Activated CD4-positive, alpha-beta T cell treated with anti-CD3 and anti-CD28 coated beads, Interleukin-2, amount 10 ng/mL, durations not matched to agents 24 days and 14 days (primary cell): ENCODE measurements at regions of chr7 and their contacts with region 1.

Region 1: DNA sequence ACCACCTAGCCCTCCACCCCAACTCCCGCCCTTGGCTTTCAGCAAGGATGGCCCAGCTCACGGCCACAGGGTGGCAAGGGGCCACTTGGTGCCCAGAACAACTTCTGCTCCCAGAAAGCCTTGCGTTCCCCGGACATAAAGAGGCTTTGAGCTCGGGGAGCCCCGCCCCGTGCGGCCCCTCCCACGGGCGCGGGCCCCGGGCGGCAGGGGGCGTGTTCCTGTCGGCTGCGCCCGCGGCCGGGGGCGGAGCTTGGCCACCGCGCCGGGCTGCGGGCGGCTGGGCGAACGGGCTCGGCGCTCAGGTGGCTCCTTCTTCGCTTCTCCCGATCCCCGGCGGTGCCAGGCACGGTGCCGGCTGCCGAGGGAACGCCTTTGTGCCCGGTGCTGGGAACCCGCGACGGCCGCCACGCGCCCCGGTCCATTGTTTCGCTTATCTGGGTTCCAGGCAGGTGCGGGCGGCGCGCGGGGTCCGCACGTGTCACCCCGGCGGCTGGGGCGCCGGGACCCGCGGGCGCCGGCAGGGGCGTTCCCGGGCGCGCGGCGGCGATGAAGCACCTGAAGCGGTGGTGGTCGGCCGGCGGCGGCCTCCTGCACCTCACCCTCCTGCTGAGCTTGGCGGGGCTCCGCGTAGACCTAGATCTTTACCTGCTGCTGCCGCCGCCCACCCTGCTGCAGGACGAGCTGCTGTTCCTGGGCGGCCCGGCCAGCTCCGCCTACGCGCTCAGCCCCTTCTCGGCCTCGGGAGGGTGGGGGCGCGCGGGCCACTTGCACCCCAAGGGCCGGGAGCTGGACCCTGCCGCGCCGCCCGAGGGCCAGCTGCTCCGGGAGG is at the start of gene NFE2L3:
- DNase-seq: peak; percentile 96
- H3K4me3 Mint-ChIP-seq: peak within 1 kb of the TSS; percentile 93
- H3K27ac Mint-ChIP-seq: peak within 1 kb of the TSS; percentile 99
- H3K4me1 Mint-ChIP-seq: peaks cover 43% of the 10 kb centered on the region
- H3K27me3 Mint-ChIP-seq: peaks cover 1% of the 10 kb centered on the region
- total RNA-seq, gene NFE2L3: 67.8 and 68.7 TPM in 2 replicates

Region 2: GRCh38 chr7:25894902-25895791 is 257.0 kb before region 1 on chr7:
- intact Hi-C with region 1: loop called (anchors 10 kb)
- DNase-seq: peak; percentile 90
- H3K4me3 Mint-ChIP-seq: peak overlapping the region; percentile 75
- H3K27ac Mint-ChIP-seq: no peak overlapping the region
- H3K4me1 Mint-ChIP-seq: peaks cover 25% of the 10 kb centered on the region
- H3K27me3 Mint-ChIP-seq: peaks cover 17% of the 10 kb centered on the region

Region 3: GRCh38 chr7:26097852-26098668 is 54.1 kb before region 1 on chr7:
- intact Hi-C with region 1: loop called (anchors 1 kb)
- DNase-seq: no peak
- H3K4me3 Mint-ChIP-seq: peak overlapping the region; percentile 52
- H3K27ac Mint-ChIP-seq: peak overlapping the region; percentile 81
- H3K4me1 Mint-ChIP-seq: peaks cover 50% of the 10 kb centered on the region
- H3K27me3 Mint-ChIP-seq: no peaks in the 10 kb centered on the region

Region 4: DNA sequence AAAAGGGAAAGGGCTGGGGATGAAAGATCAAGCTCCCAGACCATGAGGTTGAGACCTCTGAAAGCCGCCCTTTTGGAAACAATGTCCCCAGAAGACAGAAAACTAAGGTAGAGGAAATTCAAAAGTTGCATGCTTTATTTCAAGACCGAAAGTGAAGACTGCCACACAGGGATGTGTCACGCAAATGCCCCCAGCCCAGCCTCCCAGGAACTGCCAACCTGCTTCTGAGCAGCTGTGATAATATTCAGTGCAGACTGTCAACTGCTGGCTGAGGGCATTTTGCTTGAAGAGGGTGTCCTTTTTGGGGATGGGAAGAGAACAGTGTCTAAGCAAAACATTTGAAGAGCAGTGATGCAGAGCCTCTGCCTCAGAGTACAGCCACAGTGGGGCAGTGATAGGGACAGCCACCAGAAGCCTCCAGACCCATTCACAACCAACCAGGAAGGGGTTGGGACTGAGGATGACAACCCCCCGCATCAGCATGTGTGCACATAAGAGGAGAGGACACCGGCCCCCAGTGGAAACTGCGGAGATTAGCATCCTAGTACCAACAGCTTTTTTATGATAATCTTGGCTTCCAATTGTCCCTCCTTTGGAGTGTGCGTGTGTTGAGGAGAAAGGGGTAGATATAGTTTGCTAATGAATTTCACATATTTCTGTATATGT is 34.9 kb before region 1 on chr7:
- intact Hi-C with region 1: no loop called
- DNase-seq: no peak
- H3K4me3 Mint-ChIP-seq: no peak overlapping the region
- H3K27ac Mint-ChIP-seq: no peak overlapping the region
- H3K4me1 Mint-ChIP-seq: no peaks in the 10 kb centered on the region
- H3K27me3 Mint-ChIP-seq: peaks cover 10% of the 10 kb centered on the region

Region 5: GRCh38 chr7:26187380-26188205 is 35.4 kb after region 1 on chr7:
- intact Hi-C with region 1: loop called (anchors 1 kb)
- DNase-seq: no peak
- H3K4me3 Mint-ChIP-seq: peak overlapping the region; percentile 12
- H3K27ac Mint-ChIP-seq: peak overlapping the region; percentile 85
- H3K4me1 Mint-ChIP-seq: peaks cover 61% of the 10 kb centered on the region
- H3K27me3 Mint-ChIP-seq: no peaks in the 10 kb centered on the region

Region 6: DNA sequence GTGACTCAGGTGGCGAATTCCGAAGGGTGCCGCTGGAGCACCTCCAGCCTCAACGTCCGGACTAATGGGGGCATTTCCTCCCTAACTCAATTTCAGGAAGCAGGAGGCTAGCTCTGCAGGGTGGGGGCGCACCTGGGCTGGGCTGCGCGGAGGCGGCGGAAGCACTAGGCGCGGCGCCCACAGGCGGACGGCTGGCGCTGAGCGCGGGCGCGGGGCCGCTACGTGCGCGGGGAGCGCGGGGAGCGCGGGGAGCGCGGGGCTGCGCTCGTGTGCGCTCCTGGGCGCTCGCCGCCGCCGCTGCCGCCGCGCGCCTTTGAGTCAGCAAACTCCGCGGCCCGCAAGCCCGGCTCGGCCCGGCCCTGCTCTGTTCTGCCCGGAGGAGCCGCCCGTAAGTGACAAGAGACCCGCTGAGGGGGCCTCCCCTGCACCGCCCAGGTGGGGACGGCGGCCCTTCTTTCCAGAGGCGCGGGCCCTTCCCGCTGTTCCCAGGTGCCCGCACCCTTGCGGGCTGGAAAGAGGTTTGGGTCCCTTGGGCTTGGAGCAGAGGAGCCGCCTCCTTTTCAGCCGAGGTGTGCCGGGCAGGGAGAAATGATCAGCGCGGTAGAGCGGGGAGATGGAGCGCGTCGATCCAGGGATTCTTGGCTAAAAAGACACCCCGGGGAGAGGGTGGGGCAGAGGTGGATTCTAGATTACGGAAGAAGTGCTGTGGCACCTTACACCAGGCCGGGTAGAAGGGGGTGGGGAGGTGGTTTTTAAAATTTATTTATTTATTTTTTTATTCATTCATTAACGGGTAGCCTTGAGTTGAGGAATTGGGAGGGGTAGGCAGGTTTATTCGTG is 139.8 kb after region 1 on chr7 and contains the start of gene SNX10:
- intact Hi-C with region 1: loop called (anchors 1 kb)
- DNase-seq: peak; percentile 92
- H3K4me3 Mint-ChIP-seq: peak within 1 kb of the TSS; percentile 98
- H3K27ac Mint-ChIP-seq: peak within 1 kb of the TSS; percentile 91
- H3K4me1 Mint-ChIP-seq: peaks cover 32% of the 10 kb centered on the region
- H3K27me3 Mint-ChIP-seq: peaks cover 4% of the 10 kb centered on the region
- total RNA-seq, gene SNX10: 40.1 and 42.1 TPM in 2 replicates